ENCODE measurements at regions of chr9 and their contacts with region 1.

Region 1: DNA sequence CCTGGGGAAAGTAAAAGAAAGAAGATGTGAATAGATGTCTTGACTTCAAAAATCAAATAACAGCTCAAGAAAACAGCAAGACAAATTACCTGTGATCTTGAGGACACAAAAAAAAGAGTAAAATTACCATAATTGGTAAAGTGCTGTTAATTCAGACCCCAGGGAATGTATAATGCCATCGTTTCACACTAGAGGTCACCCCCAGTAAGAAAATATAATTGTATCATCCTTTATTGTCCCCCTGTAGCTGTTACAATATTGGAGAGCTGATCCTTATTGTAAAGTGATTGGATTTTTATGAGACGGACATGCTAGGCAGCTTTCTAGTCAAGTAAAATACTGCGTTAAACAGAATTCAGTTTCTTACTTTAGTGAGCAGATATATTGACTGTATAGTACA is 377.0 kb downstream of the TLE1 start:
- DNase-seq: no peak
- ATAC-seq: no peak
- H3K4me3 ChIP-seq: no peak overlapping the region
- H3K27ac ChIP-seq: no peak overlapping the region
- H3K4me1 ChIP-seq: no peaks in the 10 kb centered on the region
- H3K27me3 ChIP-seq: no peaks in the 10 kb centered on the region
- CTCF ChIP-seq: peak in 3 of 9 donors; percentile 8 to 21 (median 11)

Region 2: GRCh38 chr9:81244631-81245030 is 67.7 kb before region 1 on chr9:
- intact Hi-C with region 1: loop called in 1 of 10 experiments (anchors 2 kb)
- DNase-seq: no peak
- ATAC-seq: no peak
- H3K4me3 ChIP-seq: no peak overlapping the region
- H3K27ac ChIP-seq: no peak overlapping the region
- H3K4me1 ChIP-seq: no peaks in the 10 kb centered on the region
- H3K27me3 ChIP-seq: no peaks in the 10 kb centered on the region
- CTCF ChIP-seq: no peak

Region 3: DNA sequence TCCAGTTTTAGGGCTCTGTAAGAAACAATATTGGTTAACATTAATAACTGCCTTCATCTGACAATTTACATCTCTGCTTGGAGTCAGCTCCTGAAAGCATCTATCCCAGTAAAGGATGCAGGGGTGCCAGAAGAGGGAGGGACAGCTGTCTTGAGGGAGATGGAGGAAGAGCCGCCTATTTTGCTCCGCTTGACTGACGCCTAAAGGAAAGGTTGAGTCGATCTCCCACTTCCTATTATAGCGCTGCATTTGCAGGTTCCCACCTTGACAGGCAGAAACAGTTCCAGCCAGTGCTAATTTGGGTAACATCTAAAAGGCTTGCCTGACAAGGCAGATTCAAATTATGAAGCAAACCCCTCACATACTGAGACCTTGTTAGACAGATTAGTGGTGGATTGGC is 1050.9 kb after region 1 on chr9:
- intact Hi-C with region 1: no loop called
- DNase-seq: no peak
- ATAC-seq: no peak
- H3K4me3 ChIP-seq: no peak overlapping the region
- H3K27ac ChIP-seq: no peak overlapping the region
- H3K4me1 ChIP-seq: no peaks in the 10 kb centered on the region
- H3K27me3 ChIP-seq: peaks cover 0 to 3% (median 0%) of the 10 kb centered on the region in 7 donors
- CTCF ChIP-seq: no peak